ENCODE measurements at regions of chr9 and their contacts with region 1.

Region 1: GRCh38 chr9:127450830-127451724 is at the starts of genes LRSAM1 and RPL12:
- DNase-seq: peak; percentile 97
- H3K4me3 Mint-ChIP-seq: peak within 1 kb of the TSS; percentile 94
- H3K27ac Mint-ChIP-seq: peak within 1 kb of the TSS; percentile 94
- H3K4me1 Mint-ChIP-seq: peaks cover 37% of the 10 kb centered on the region
- H3K27me3 Mint-ChIP-seq: no peaks in the 10 kb centered on the region
- total RNA-seq, gene LRSAM1: 19.7 to 20.9 TPM
- total RNA-seq, gene RPL12: 2,267 to 2,331 TPM

Region 2: GRCh38 chr9:126939821-126940221 is 511.3 kb before region 1 on chr9:
- CTCF ChIA-PET with region 1: interaction called, 14 read pairs
- POLR2A ChIA-PET with region 1: no interaction called
- intact Hi-C with region 1: no loop called
- DNase-seq: no peak
- H3K4me3 Mint-ChIP-seq: no peak overlapping the region
- H3K27ac Mint-ChIP-seq: no peak overlapping the region
- H3K4me1 Mint-ChIP-seq: peaks cover 5% of the 10 kb centered on the region
- H3K27me3 Mint-ChIP-seq: no peaks in the 10 kb centered on the region

Region 3: GRCh38 chr9:127311239-127311741 is 139.8 kb before region 1 on chr9:
- CTCF ChIA-PET with region 1: interaction called, 9 read pairs
- POLR2A ChIA-PET with region 1: interaction called, 5 read pairs
- intact Hi-C with region 1: loop called (anchors 10 kb)
- DNase-seq: peak; percentile 39
- H3K4me3 Mint-ChIP-seq: no peak overlapping the region
- H3K27ac Mint-ChIP-seq: no peak overlapping the region
- H3K4me1 Mint-ChIP-seq: no peaks in the 10 kb centered on the region
- H3K27me3 Mint-ChIP-seq: peaks cover 5% of the 10 kb centered on the region

Region 4: DNA sequence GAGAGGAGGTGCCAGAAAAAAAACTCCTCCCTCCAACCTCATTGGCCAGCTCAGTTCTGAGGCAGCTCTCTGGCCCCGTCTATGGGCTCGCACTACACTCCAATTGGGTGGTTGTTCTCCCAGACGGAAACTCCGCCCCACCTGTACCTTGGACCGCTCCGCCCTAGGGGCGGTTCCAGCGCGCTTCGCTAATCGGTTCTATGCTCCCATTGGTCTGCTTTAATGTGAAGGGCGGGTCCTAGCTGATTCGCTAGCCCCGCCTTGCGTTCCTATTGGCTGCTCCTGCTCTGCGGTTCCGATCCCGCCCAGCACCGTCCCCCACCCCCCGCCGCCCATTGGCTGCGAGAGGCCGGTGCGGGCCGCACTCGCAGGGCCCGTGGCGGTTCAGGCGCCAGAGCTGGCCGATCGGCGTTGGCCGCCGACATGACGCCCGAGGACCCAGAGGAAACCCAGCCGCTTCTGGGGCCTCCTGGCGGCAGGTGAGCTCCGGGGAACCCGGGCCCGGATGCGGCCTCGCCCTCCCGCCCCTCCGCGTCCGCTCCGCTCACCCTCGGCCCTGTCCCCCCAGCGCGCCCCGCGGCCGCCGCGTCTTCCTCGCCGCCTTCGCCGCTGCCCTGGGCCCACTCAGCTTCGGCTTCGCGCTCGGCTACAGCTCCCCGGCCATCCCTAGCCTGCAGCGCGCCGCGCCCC is 54.1 kb before region 1 on chr9 and contains the start of gene SLC2A8:
- CTCF ChIA-PET with region 1: interaction called, 8 read pairs
- POLR2A ChIA-PET with region 1: interaction called, 18 read pairs
- intact Hi-C with region 1: loop called (anchors 2 kb)
- DNase-seq: peak; percentile 97
- H3K4me3 Mint-ChIP-seq: peak within 1 kb of the TSS; percentile 60
- H3K27ac Mint-ChIP-seq: no peak within 1 kb of the TSS
- H3K4me1 Mint-ChIP-seq: peaks cover 16% of the 10 kb centered on the region
- H3K27me3 Mint-ChIP-seq: peaks cover 57% of the 10 kb centered on the region
- total RNA-seq, gene SLC2A8: 3.2 to 4.6 TPM

Region 5: DNA sequence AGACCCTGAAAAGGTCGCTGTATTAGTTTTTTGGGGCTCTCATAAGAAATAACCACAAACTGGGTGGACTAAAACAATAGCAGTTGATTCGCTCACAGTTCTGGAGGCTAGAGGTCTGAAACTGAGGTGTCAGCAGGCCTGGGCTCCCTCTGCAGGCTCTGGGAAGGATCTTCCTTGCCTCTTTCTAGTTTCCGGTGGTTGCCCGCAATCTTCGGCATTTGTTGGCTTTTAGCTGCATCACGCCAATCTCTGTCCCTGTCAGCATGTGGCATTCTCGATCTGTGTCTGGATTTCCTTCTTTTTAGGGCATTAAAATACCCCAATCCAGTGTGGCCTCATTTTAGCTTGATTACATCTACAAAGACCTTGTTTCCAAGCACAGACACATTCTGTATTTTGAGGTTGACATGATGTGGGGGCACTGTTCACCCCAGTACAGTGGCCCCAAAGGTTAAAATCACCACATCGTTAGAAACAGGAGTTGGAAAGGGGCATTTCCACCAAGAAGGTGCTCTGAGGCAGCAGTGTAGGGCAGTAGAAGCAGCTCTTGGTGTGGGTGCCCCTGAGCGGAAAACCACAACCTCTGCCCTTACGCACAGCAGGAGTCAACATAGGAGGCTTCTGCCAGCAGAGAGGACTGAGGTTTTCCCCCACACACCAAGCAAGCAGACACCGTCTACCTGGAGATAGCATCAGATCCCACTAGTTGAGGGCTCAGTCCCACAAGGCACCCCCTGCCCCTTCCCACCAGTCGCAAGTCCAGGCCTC is 13.4 kb before region 1 on chr9:
- CTCF ChIA-PET with region 1: no interaction called
- POLR2A ChIA-PET with region 1: interaction called, 20 read pairs
- intact Hi-C with region 1: no loop called
- DNase-seq: peak; percentile 51
- H3K4me3 Mint-ChIP-seq: no peak overlapping the region
- H3K27ac Mint-ChIP-seq: peak overlapping the region; percentile 77
- H3K4me1 Mint-ChIP-seq: peaks cover 15% of the 10 kb centered on the region
- H3K27me3 Mint-ChIP-seq: no peaks in the 10 kb centered on the region

Measured in activated CD4-positive, alpha-beta memory T cell treated with anti-CD3 and anti-CD28 coated beads for 36 hours (primary cell).